Activated CD8-positive, alpha-beta memory T cell treated with anti-CD3 and anti-CD28 coated beads, Interleukin-2, amount 10 ng/mL, durations not matched to agents 7 days and 5 days (primary cell): ENCODE measurements at regions of chr14 and their contacts with region 1.

Region 1: GRCh38 chr14:20343092-20343861 is at the start of gene PARP2:
- DNase-seq: peak; percentile 98
- ATAC-seq: peak; percentile 93
- H3K4me3 Mint-ChIP-seq: peak within 1 kb of the TSS; percentile 83
- H3K27ac Mint-ChIP-seq: peak within 1 kb of the TSS; percentile 86
- H3K4me1 Mint-ChIP-seq: peaks cover 18% of the 10 kb centered on the region
- H3K27me3 Mint-ChIP-seq: no peaks in the 10 kb centered on the region
- total RNA-seq, gene PARP2: 32.6 to 38.4 TPM

Region 2: GRCh38 chr14:20219033-20219432 is 124.2 kb before region 1 on chr14:
- CTCF ChIA-PET with region 1: no interaction called
- DNase-seq: no peak
- ATAC-seq: no peak
- H3K4me3 Mint-ChIP-seq: no peak overlapping the region
- H3K27ac Mint-ChIP-seq: no peak overlapping the region
- H3K4me1 Mint-ChIP-seq: no peaks in the 10 kb centered on the region
- H3K27me3 Mint-ChIP-seq: no peaks in the 10 kb centered on the region

Region 3: DNA sequence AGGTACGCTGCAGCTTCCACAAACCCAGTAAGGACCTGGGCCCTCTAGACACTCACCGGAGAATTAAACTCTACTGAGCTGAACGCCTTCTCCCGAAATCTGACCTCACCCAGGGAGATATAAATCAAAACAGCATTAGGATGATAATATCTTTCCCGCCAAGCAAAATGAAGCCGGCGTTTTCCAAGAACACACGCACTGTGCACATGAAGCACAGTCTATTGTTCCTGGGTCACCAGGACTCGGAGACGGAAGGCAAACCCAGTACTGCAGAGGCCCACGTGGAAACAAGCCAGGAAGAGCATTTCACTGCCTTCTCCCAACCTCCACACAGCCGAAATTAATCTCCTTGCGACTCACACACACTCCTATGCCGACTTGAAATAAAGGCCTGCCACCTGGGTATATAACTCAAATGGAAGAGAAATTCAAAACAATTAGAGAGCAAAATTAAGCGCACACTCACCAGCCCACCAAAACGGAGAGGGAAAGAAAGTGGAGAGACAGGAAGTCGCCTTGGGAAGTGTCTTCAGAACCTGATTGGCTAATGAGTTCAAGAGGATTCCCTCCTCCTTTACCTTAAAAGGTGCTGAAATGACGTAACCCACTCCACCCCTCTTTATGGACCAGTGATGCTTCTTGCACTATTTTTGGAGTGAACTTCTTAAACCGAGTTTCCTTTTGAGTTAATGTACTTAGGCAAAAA is 10.3 kb before region 1 on chr14 and contains the start of gene CCNB1IP1:
- CTCF ChIA-PET with region 1: interaction called, 67 read pairs
- DNase-seq: peak; percentile 74
- ATAC-seq: peak; percentile 99
- H3K4me3 Mint-ChIP-seq: peak within 1 kb of the TSS; percentile 93
- H3K27ac Mint-ChIP-seq: peak within 1 kb of the TSS; percentile 94
- H3K4me1 Mint-ChIP-seq: peaks cover 53% of the 10 kb centered on the region
- H3K27me3 Mint-ChIP-seq: no peaks in the 10 kb centered on the region
- total RNA-seq, gene CCNB1IP1: 39.0 to 39.5 TPM

Region 4: GRCh38 chr14:20376071-20376588 is 32.9 kb after region 1 on chr14:
- CTCF ChIA-PET with region 1: no interaction called
- DNase-seq: no peak
- ATAC-seq: no peak
- H3K4me3 Mint-ChIP-seq: no peak overlapping the region
- H3K27ac Mint-ChIP-seq: no peak overlapping the region
- H3K4me1 Mint-ChIP-seq: peaks cover 2% of the 10 kb centered on the region
- H3K27me3 Mint-ChIP-seq: no peaks in the 10 kb centered on the region